ENCODE measurements at regions of chr5 and their contacts with region 1.

Region 1: GRCh38 chr5:14142827-14143548 is at the start of gene TRIO:
- DNase-seq: peak; percentile 89
- ATAC-seq: peak; percentile 54
- H3K4me3 Mint-ChIP-seq: peak within 1 kb of the TSS; percentile 89
- H3K27ac Mint-ChIP-seq: peak within 1 kb of the TSS; percentile 94
- H3K4me1 Mint-ChIP-seq: peaks cover 37% of the 10 kb centered on the region
- H3K27me3 Mint-ChIP-seq: peaks cover 2% of the 10 kb centered on the region
- CTCF ChIP-seq: no peak
- total RNA-seq, gene TRIO: 191 and 223 TPM in 2 replicates

Region 2: GRCh38 chr5:14108170-14108996 is 34.6 kb before region 1 on chr5:
- CTCF ChIA-PET with region 1: interaction called, 6 read pairs
- POLR2A ChIA-PET with region 1: no interaction called
- intact Hi-C with region 1: loop called (anchors 1 kb)
- DNase-seq: no peak
- ATAC-seq: peak; percentile 85
- H3K4me3 Mint-ChIP-seq: peak overlapping the region; percentile 76
- H3K27ac Mint-ChIP-seq: peak overlapping the region; percentile 80
- H3K4me1 Mint-ChIP-seq: peaks cover 40% of the 10 kb centered on the region
- H3K27me3 Mint-ChIP-seq: peaks cover 1% of the 10 kb centered on the region
- CTCF ChIP-seq: no peak

Region 3: DNA sequence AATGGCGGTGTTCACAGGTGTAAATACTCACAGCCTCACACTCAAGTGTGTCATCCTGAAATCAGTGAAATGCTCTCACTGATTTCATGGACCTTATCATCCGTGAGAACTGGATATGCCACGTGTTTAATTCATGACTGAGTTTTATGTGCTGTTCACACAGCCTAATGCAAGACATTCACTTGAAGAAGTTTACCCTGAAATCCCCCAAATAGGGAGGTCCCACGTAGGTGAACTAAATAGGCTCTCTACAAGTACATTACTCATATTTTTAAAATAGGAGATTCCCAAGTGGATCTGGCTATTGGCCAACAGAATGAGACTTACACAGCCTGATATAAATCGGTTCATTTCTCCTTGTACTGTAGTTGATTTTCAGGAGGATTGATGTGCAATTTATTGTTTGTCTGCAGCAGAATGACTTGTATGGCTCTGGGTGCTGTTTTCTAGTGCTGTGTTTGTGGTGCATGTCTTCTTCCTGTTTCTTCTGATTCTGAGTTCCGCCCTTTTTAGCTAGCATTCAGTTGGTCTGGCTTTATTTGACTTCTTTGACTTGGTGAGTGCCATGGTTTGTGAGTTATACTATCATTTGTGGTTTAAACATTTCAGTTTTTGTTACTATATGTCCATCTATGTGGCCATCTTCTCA is 25.3 kb after region 1 on chr5:
- CTCF ChIA-PET with region 1: interaction called, 5 read pairs
- POLR2A ChIA-PET with region 1: interaction called, 8 read pairs
- intact Hi-C with region 1: loop called (anchors 1 kb)
- DNase-seq: no peak
- ATAC-seq: peak; percentile 61
- H3K4me3 Mint-ChIP-seq: peak overlapping the region; percentile 71
- H3K27ac Mint-ChIP-seq: peak overlapping the region; percentile 85
- H3K4me1 Mint-ChIP-seq: peaks cover 88% of the 10 kb centered on the region
- H3K27me3 Mint-ChIP-seq: no peaks in the 10 kb centered on the region
- CTCF ChIP-seq: no peak

Region 4: GRCh38 chr5:14250084-14250695 is 107.2 kb after region 1 on chr5:
- CTCF ChIA-PET with region 1: interaction called, 3 read pairs
- POLR2A ChIA-PET with region 1: interaction called, 6 read pairs
- intact Hi-C with region 1: loop called (anchors 1 kb)
- DNase-seq: no peak
- ATAC-seq: peak; percentile 22
- H3K4me3 Mint-ChIP-seq: peak overlapping the region; percentile 55
- H3K27ac Mint-ChIP-seq: peak overlapping the region; percentile 87
- H3K4me1 Mint-ChIP-seq: peaks cover 89% of the 10 kb centered on the region
- H3K27me3 Mint-ChIP-seq: no peaks in the 10 kb centered on the region
- CTCF ChIP-seq: no peak

Region 5: GRCh38 chr5:14270209-14270702 is 127.3 kb after region 1 on chr5:
- CTCF ChIA-PET with region 1: interaction called, 18 read pairs
- POLR2A ChIA-PET with region 1: interaction called, 8 read pairs
- intact Hi-C with region 1: loop called (anchors 1 kb)
- DNase-seq: no peak
- ATAC-seq: peak; percentile 75
- H3K4me3 Mint-ChIP-seq: no peak overlapping the region
- H3K27ac Mint-ChIP-seq: no peak overlapping the region
- H3K4me1 Mint-ChIP-seq: peaks cover 53% of the 10 kb centered on the region
- H3K27me3 Mint-ChIP-seq: no peaks in the 10 kb centered on the region
- CTCF ChIP-seq: peak; percentile 67

Region 6: DNA sequence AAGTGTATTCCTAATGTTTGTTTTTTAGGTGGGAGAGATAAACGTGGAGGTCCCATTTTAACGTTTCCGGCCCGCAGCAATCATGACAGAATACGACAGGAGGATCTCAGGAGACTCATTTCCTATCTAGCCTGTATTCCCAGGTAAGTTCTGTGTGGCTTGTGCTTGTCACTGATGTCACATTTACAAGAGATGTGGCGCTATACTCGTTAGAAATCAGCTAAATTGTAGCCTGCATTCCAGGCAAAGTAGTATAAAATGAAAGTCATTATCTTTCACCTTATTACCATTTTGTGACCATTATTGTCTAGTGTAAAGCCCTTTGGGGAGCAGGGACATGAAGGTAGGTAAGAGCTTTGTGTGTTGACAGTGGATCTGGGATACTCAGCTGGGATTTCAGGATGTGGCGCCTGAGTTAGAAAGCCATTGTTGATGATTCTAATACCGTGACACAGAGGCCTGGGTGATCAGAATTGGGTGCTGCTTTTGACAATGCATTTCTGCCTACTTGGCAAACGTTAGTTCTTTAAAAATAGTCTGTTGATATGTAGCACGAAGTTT is 137.4 kb after region 1 on chr5:
- CTCF ChIA-PET with region 1: no interaction called
- POLR2A ChIA-PET with region 1: no interaction called
- intact Hi-C with region 1: no loop called
- DNase-seq: no peak
- ATAC-seq: no peak
- H3K4me3 Mint-ChIP-seq: no peak overlapping the region
- H3K27ac Mint-ChIP-seq: no peak overlapping the region
- H3K4me1 Mint-ChIP-seq: peaks cover 38% of the 10 kb centered on the region
- H3K27me3 Mint-ChIP-seq: no peaks in the 10 kb centered on the region
- CTCF ChIP-seq: no peak

Region 7: GRCh38 chr5:14664302-14665100 is 521.5 kb after region 1 on chr5 and contains the start of gene OTULIN:
- CTCF ChIA-PET with region 1: no interaction called
- POLR2A ChIA-PET with region 1: no interaction called
- intact Hi-C with region 1: loop called (anchors 2 kb)
- DNase-seq: peak; percentile 90
- ATAC-seq: peak; percentile 78
- H3K4me3 Mint-ChIP-seq: peak within 1 kb of the TSS; percentile 97
- H3K27ac Mint-ChIP-seq: peak within 1 kb of the TSS; percentile 99
- H3K4me1 Mint-ChIP-seq: peaks cover 87% of the 10 kb centered on the region
- H3K27me3 Mint-ChIP-seq: no peaks in the 10 kb centered on the region
- CTCF ChIP-seq: no peak
- total RNA-seq, gene OTULIN: 94.0 and 96.5 TPM in 2 replicates

Measured in activated B cell treated with CpG ODN at 0.5 μM for 24 hours (primary cell).